ENCODE measurements at regions of chr13 and their contacts with region 1.

Region 1: DNA sequence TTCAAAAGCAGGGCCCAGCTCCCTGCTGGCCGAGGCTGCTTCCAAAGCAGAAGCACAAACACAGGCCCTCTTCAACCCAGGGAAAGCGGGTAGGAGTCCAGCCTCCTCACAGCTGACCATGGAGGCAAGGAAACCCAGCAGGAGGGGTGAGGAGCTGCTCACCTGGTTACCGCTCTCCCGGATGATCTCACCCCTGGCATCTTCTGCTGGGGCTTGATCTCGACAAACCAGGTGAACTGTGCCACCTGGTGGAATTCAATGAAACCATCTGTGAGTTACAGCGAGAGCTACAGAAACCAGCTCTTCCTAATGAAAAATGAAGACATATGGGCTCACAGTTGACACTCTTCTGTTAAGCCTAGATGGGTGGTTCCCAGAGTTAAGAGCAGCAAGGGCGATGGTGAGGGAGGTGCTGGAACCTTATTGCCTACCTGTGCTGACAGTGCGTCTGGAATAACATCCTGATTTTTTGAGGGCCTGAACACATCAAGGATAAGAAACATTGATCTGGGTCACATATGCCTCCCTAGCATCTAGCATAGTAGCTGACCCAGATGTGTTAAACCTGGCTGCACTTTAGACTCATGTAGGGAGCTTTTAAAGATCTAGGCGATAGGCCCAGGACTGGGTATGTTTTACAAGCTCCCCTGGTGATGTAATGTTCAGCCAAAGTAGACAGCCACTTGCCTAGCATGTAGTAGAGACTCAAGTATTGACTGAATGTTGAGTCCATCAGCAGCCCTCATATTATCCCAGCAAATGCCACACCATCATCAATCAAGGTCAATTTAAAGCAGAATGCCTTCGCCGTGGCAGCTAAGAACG is 6.1 kb downstream of the DHRS12 start:
- DNase-seq: no peak
- H3K4me3 ChIP-seq: no peak overlapping the region
- CTCF ChIP-seq: peak; percentile 42

Region 2: DNA sequence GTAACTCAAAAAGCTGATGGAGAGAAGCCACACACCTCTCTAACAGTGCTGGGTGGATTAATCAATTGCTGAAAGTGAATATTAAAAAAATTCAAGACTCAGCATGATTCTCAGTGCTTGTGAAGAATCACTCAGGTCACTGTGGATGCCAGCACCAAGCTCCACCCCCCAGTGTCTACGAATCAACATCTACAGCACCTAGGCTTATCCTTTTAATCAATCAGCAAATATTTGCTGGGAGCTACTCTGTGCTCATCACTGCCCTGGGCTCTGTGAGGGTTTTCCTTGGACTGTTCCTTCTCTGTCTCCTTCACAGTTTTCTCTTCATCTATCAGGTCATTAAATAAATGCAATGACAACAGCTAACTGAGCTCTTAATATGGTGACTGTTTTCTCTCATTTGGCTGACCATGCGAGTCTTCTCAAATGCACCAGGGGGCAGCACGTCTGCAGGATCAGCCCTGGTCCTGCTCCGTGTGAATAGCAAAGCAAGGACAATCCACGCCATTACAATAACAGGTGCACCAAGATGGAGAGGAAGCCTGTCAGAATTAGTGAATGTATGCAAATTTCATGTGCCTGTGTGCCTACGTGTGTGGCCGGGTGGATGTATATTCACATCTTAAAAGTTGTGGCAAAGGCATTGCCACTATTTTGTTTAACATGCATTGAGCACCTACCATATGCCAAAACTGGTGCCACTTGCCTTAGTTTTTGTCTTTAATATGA is 672.2 kb before region 1 on chr13:
- CTCF ChIA-PET with region 1: interaction called, 47 read pairs
- POLR2A ChIA-PET with region 1: no interaction called
- DNase-seq: no peak
- H3K4me3 ChIP-seq: no peak overlapping the region
- CTCF ChIP-seq: peak; percentile 84

Region 3: DNA sequence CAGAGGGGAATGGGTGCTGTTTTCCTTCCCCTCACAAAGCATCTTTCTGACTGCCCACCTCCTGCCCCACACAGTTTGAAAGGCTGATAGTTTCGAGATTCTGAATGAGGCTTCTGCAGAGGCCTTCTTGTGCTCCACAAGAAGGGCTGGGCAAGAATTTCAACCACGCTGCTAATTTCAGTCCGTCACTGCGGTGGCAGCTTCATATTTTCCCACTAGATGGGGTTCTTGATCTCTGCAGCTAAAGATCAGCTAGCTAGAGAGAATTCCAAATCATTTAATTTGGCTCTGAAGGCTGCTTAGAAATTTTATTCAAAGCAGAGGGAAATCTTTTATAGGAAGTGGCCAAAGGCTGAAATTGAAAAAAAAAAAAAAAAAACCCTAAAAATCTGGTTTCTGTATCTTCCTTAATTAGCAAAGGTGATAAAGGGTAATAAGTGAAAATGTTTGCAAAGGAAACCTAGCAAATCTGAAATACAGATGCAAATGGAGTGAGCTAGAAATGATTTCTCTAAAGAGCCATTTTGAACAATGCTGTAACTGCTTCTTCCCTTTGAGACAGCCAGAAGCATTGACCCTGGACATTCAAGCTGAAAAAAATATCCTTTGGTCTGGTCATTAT is 648.8 kb before region 1 on chr13:
- CTCF ChIA-PET with region 1: interaction called, 23 read pairs
- POLR2A ChIA-PET with region 1: no interaction called
- DNase-seq: peak; percentile 28
- H3K4me3 ChIP-seq: no peak overlapping the region
- CTCF ChIP-seq: peak; percentile 47

Region 4: DNA sequence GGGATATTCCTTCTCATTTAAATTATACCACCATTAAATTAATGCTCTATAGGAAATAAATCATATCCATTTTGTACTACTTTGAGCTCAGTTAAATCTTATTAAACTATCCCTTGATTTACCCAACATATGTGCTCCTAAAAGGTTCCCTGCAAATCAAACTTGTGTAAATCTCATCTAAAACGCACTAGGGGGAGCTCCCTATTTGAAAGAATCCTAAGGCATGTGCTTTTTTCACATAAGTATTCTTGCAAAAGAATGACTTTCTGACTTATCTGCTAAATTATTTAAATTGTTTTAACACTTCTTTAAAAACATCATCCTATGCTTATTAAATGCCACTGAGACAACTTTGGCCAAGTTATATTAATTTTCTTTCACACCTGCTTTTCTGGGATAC is 353.0 kb before region 1 on chr13:
- CTCF ChIA-PET with region 1: interaction called, 22 read pairs
- POLR2A ChIA-PET with region 1: no interaction called
- DNase-seq: peak; percentile 23
- H3K4me3 ChIP-seq: no peak overlapping the region
- CTCF ChIP-seq: peak; percentile 20

Region 5: DNA sequence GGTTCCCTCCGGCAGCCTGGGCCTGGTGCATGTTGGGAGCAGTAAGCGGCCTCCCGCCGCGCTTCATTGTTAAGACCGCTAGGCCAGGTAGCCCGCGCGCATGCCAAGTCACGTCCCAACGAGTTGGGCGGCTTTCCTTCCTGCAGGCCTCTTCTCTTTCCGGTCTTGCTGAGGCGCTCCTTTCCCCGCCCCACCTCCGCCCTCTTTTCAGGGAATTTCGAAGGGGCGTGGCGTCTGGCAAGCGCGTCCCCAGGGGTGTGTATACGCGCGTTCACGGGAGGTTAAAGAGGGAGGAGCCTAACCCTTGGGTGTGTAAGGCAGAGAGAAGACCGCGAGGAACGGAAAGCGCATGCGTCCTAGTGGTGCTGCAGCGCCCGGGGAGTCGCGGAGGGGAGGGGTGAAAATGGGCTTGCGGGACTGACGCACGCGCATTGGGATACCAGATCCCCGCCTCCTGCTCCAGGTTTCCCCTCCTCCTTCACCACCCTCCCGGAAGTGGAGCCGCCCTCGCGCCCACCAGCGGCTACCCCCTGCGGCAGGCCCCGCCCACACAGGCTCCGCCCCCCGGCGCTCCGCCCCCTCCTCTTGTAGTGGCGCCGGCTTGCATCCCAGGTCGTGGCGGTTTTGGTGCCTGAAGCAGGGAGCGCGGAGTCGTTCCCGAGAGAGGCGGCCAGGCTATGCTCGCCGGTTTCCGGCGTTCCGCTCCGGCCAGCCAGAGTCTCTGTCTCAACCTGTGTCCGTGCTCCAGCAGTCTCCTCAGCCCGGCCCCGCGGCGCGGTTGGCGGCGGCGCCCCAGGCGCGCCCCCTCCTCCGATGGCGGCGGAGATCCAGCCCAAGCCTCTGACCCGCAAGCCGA is 213.8 kb before region 1 on chr13 and contains the start of gene WDFY2:
- CTCF ChIA-PET with region 1: interaction called, 18 read pairs
- POLR2A ChIA-PET with region 1: interaction called, 3 read pairs
- DNase-seq: peak; percentile 98
- H3K4me3 ChIP-seq: peak within 1 kb of the TSS; percentile 92
- CTCF ChIP-seq: peak; percentile 51

Region 6: DNA sequence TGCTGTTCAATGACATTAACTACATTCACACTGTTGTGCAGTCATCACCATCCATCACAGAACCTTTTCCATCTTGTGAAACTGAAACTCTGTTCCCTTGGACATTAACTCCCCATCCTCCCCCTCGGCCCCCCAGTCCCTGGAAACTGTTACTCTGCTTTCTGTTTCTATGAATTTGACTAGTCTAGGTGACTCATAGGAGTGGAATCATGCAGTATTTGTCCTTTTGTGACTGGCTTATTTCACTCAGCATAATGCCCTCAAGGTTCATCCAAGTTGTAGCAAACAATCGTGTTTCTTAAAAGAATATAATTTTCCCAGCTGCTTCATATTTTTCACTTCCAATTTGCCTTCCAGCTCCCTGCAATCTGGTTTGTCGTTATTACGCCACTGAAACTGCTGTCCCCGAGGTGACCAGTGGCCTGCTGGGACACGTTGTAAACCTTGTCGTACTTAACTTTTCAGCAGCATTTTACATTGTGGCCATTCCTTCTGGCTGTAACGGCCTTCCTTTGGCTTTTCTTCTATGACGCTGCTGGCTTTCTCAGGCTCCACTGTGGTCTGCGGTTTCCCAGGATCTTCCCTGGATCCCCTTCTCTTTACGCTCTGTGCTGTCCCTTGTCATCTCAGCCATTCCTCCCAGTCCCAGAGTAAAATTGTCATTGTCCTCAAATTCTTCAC is 67.9 kb before region 1 on chr13:
- CTCF ChIA-PET with region 1: interaction called, 15 read pairs
- POLR2A ChIA-PET with region 1: no interaction called
- DNase-seq: peak; percentile 53
- H3K4me3 ChIP-seq: no peak overlapping the region
- CTCF ChIP-seq: no peak

Region 7: GRCh38 chr13:51781246-51782022 is 16.4 kb before region 1 on chr13:
- CTCF ChIA-PET with region 1: interaction called, 17 read pairs
- POLR2A ChIA-PET with region 1: interaction called, 3 read pairs
- DNase-seq: no peak
- H3K4me3 ChIP-seq: no peak overlapping the region
- CTCF ChIP-seq: peak; percentile 50